Body of pancreas (tissue), 4 donors: ENCODE measurements at regions of chr13 and their contacts with region 1.

Region 1: GRCh38 chr13:94549232-94550061 is 46.5 kb downstream of the TGDS start:
- DNase-seq: peak; percentile 91 to 93 (median 92)
- ATAC-seq: peak; percentile 89
- H3K4me3 ChIP-seq: peak overlapping the region; percentile 26 to 77
- H3K27ac ChIP-seq: peak overlapping the region; percentile 80 to 92 (median 87)
- H3K4me1 ChIP-seq: peaks cover 15% of the 10 kb centered on the region
- H3K27me3 ChIP-seq: no peaks in the 10 kb centered on the region
- CTCF ChIP-seq: peak in 2 of 7 experiments; percentile 14
- POLR2A ChIP-seq: peak; percentile 51 to 73 (median 69)

Region 2: GRCh38 chr13:94595950-94596574 is 46.6 kb after region 1 on chr13 and contains the start of gene TGDS:
- intact Hi-C with region 1: loop called (anchors 10 kb)
- DNase-seq: peak; percentile 91 to 97 (median 93)
- ATAC-seq: peak; percentile 99
- H3K4me3 ChIP-seq: peak within 1 kb of the TSS; percentile 64 to 79
- H3K27ac ChIP-seq: peak within 1 kb of the TSS; percentile 62 to 81 (median 74)
- H3K4me1 ChIP-seq: peaks cover 33% of the 10 kb centered on the region
- H3K27me3 ChIP-seq: no peaks in the 10 kb centered on the region
- CTCF ChIP-seq: peak in 5 of 7 experiments; percentile 5 to 41 (median 22)
- POLR2A ChIP-seq: peak; percentile 60 to 87 (median 81)
- total RNA-seq, gene TGDS: 6.0 to 8.2 TPM